ENCODE measurements at regions of chr17 and their contacts with region 1.

Region 1: GRCh38 chr17:8057691-8058114 is 18.8 kb downstream of the ALOX15B start:
- H3K4me3 ChIP-seq: no peak overlapping the region
- H3K27ac ChIP-seq: no peak overlapping the region
- H3K4me1 ChIP-seq: peaks cover 5% of the 10 kb centered on the region; the same call in 1 of the 2 replicates
- CTCF ChIP-seq: peak; percentile 73

Region 2: GRCh38 chr17:7862692-7863437 is 194.8 kb before region 1 on chr17:
- CTCF ChIA-PET with region 1: interaction called, 50 read pairs
- POLR2A ChIA-PET with region 1: no interaction called
- H3K4me3 ChIP-seq: no peak overlapping the region
- H3K27ac ChIP-seq: no peak overlapping the region
- H3K4me1 ChIP-seq: peaks cover 5% of the 10 kb centered on the region
- CTCF ChIP-seq: peak; percentile 67

Region 3: DNA sequence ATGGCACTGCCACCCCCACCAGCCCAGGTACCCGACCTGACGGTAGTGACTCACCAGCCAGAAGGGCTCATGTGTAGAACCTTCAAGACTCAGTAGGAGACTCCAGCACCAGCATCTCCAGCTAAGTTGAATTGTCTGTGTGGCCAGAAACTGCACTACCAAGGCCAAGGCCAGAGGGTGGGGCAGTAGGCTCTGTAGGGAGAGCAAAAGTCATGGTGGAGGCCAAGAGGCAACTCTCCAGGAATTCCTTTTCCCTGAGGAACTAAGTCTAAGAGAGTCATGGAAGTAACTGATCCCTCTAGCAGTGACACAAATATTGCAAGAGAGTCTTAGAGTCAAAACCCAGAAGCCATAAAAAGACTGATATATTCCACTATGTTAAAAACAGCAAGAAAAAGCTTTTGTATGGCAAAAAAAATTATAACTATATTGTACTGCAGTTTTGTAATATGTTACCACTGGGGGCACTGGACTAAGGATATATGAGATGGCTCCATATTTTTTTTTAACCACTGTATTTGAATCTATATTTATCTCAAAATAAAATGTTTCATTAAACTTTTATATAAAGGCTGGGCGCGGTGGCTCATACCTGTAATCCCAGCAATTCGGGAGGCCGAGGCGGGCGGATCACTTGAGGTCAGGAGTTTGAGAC is 85.4 kb before region 1 on chr17:
- CTCF ChIA-PET with region 1: no interaction called
- POLR2A ChIA-PET with region 1: no interaction called
- H3K4me3 ChIP-seq: no peak overlapping the region
- H3K27ac ChIP-seq: no peak overlapping the region
- H3K4me1 ChIP-seq: no peaks in the 10 kb centered on the region
- CTCF ChIP-seq: no peak

Region 4: GRCh38 chr17:7997186-7997585 is 60.5 kb before region 1 on chr17:
- CTCF ChIA-PET with region 1: interaction called, 15 read pairs
- POLR2A ChIA-PET with region 1: no interaction called
- H3K4me3 ChIP-seq: no peak overlapping the region
- H3K27ac ChIP-seq: no peak overlapping the region
- H3K4me1 ChIP-seq: no peaks in the 10 kb centered on the region
- CTCF ChIP-seq: no peak

Region 5: DNA sequence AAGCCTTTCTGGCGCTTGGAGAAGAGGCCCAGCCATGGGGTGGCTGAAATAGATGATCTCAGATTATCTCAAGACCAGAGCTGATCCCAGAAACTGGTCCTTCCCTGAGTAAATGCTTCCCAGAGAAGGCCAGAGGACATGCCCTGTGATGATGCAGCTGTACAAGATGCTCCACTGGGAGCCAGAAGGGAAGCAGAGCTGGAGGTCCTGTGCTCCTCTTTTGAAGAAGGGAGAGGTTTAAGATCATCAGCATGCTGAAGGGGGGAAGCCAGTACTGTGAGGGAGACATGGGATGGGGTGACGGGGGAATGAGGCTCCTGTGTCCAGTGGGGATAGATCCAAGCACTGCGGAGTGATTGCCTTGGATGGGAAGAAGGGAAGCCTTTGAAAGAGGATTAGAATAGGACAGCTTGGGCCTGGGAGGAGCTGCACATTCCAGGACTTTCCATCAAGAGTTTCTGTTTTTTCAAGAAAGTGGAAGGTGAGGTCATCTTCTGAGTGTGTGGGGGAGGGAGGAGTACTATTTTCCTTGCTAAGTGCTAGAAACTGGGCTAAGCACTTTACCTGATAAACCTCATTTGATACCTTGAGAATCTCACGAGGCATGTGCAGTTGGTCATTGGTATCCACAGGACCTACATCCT is 35.2 kb before region 1 on chr17:
- CTCF ChIA-PET with region 1: interaction called, 38 read pairs
- POLR2A ChIA-PET with region 1: no interaction called
- H3K4me3 ChIP-seq: no peak overlapping the region
- H3K27ac ChIP-seq: no peak overlapping the region
- H3K4me1 ChIP-seq: no peaks in the 10 kb centered on the region
- CTCF ChIP-seq: no peak

Region 6: GRCh38 chr17:8079291-8080207 is 21.8 kb after region 1 on chr17:
- CTCF ChIA-PET with region 1: interaction called, 214 read pairs
- POLR2A ChIA-PET with region 1: interaction called, 3 read pairs
- H3K4me3 ChIP-seq: peak overlapping the region; percentile 55
- H3K27ac ChIP-seq: peak overlapping the region; percentile 79
- H3K4me1 ChIP-seq: peaks cover 7% of the 10 kb centered on the region
- CTCF ChIP-seq: peak; percentile 99

Region 7: GRCh38 chr17:8118769-8119580 is 61.3 kb after region 1 on chr17:
- CTCF ChIA-PET with region 1: interaction called, 81 read pairs
- POLR2A ChIA-PET with region 1: no interaction called
- H3K4me3 ChIP-seq: peak overlapping the region; percentile 48
- H3K27ac ChIP-seq: peak overlapping the region; percentile 72
- H3K4me1 ChIP-seq: peaks cover 2% of the 10 kb centered on the region
- CTCF ChIP-seq: peak; percentile 90

Region 8: DNA sequence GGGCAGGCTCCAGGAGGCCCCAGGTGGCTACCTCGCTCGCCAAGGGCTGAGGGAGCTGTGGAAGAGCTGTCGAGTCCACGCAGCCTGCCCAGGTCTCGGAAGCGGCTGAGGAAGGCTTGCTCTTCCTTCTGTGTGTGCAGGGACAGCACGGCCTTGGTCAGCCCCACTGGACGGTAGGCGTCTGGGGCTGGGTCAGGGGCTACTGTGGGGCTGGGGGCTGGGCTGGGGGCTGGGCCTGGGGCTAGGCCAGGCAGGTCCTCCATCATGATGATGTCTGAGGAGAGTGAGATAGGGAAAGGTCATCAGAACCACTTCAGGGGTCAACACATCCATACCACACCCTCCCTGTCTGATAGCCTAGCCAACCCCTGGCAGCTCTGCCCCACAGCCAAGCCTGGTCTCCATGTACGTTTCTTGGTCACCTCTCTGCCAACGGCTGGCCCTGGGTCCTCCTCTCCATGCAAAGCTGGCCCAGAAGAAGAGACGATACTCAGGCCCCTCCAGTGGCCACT is 87.1 kb after region 1 on chr17:
- CTCF ChIA-PET with region 1: no interaction called
- POLR2A ChIA-PET with region 1: no interaction called
- H3K4me3 ChIP-seq: no peak overlapping the region
- H3K27ac ChIP-seq: no peak overlapping the region
- H3K4me1 ChIP-seq: no peaks in the 10 kb centered on the region
- CTCF ChIP-seq: no peak